Gastrocnemius medialis (tissue), 4 donors: ENCODE measurements at regions of chr16 and their contacts with region 1.

Region 1: DNA sequence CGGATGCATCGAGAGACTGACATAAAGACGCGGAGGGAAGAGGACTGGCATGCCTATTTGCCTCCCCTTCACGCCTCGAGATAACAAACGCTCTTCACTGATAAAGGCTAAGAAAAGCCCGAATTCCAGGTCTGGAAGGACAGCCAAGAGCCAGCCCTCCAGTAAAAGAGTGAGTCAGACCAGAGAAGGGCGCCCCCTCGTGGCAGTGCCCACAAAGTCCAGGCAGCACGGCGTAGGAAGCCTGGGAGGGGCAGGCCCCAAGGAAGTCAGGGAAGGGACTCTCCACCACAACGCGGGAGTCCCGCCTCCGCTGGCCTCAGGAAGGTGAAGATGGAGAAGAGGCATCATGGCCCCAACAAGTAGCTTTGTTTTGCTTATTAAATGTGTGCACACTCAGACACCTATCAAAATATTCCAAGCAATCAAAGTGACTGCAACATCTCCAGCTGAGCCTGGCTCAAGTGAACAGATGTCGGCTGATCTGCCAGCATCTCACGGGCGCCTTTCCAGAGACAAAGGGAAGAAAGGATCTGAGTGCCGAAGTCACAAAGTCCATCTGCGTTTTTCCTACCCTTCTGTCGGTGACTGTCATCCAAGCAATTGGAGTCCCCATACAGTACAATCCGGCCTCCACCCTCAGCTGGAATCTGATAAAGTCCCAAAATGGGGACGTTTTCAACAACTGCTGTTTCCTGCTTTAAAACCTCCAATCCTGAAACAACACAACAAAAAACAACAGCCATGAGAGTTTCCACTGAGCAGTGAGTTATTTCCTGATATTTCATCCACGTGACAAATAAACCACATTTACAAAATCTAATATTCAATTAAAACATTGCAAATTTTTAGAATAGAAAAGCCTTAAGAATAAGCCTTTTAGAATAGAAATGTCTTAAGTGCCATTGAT is 20.4 kb upstream of the SLC38A8 start:
- DNase-seq: peak; percentile 22 to 67
- ATAC-seq: peak; percentile 76 to 78
- H3K4me3 ChIP-seq: no peak overlapping the region
- H3K27ac ChIP-seq: no peak overlapping the region
- H3K4me1 ChIP-seq: no peaks in the 10 kb centered on the region
- H3K27me3 ChIP-seq: no peaks in the 10 kb centered on the region
- CTCF ChIP-seq: peak; percentile 74 to 89 (median 83)
- POLR2A ChIP-seq: no peak

Region 2: DNA sequence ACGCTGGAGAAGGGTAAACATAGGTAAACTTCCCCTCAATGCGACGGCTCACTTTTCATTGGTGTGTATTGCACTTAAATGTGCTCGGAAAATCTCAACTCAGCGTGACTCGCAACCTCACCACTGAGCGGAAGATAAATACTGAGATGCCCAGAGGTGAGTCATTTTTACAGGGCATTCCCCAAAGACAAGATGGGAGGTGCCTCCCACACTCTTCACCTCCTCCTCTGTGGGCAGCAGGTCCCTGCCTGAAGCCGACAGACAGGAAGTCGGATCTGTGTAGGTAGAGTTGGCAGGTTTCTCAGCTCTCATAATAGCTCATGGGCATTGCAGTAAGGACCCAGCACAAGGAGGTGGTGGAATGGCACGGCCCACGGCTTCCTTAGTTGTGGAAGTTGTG is 529.8 kb before region 1 on chr16:
- in situ Hi-C with region 1: no loop called
- intact Hi-C with region 1: no loop called
- DNase-seq: no peak
- ATAC-seq: no peak
- H3K4me3 ChIP-seq: no peak overlapping the region
- H3K27ac ChIP-seq: no peak overlapping the region
- H3K4me1 ChIP-seq: peaks cover 0 to 9% of the 10 kb centered on the region in 2 donors
- H3K27me3 ChIP-seq: no peaks in the 10 kb centered on the region
- CTCF ChIP-seq: no peak
- POLR2A ChIP-seq: no peak

Region 3: GRCh38 chr16:83813823-83814658 is 248.9 kb before region 1 on chr16:
- in situ Hi-C with region 1: loop called in 1 of 4 experiments (anchors 10 kb)
- intact Hi-C with region 1: no loop called
- DNase-seq: no peak
- ATAC-seq: peak; percentile 30 to 39
- H3K4me3 ChIP-seq: no peak overlapping the region
- H3K27ac ChIP-seq: no peak overlapping the region
- H3K4me1 ChIP-seq: peaks cover 10 to 13% of the 10 kb centered on the region in 2 donors
- H3K27me3 ChIP-seq: no peaks in the 10 kb centered on the region
- CTCF ChIP-seq: no peak
- POLR2A ChIP-seq: no peak

Region 4: DNA sequence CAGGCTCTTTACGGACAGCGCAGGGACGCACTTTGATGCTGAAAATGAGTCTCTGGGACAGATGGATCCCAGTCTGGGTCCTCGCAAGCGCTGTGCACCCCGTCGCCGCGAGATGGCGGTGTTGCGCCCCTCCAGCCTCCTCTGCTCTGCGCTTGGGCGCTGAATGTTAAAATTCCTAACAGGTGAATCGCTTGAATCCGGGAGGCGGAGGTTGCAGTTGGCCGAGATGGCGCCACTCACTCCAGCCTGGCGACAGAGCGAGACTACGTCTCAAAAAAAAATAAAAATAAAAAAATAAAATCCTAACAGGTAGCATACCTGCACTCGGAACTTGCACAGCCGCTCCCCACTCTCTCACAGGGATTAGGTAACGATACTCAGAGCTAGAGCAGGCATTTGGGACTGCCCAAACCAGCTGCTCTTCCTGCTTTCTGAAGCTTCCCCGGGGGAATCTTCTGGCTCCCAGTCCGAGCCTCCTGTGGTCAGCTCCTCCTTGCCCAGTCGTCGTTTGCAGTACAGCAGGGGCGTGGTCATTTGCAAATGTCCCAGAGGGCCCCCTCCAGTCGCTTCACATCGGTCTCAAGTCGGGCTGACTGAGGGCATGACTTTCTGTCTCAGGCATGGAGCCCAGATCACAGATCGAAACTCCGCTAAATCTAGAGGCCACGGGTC is 136.1 kb before region 1 on chr16:
- in situ Hi-C with region 1: no loop called
- intact Hi-C with region 1: loop called (anchors 2 kb)
- DNase-seq: peak; percentile 42 to 64
- ATAC-seq: peak; percentile 83 to 86
- H3K4me3 ChIP-seq: no peak overlapping the region
- H3K27ac ChIP-seq: no peak overlapping the region
- H3K4me1 ChIP-seq: peaks cover 8 to 10% of the 10 kb centered on the region in 2 donors
- H3K27me3 ChIP-seq: no peaks in the 10 kb centered on the region
- CTCF ChIP-seq: peak; percentile 75 to 98 (median 92)
- POLR2A ChIP-seq: no peak

Region 5: DNA sequence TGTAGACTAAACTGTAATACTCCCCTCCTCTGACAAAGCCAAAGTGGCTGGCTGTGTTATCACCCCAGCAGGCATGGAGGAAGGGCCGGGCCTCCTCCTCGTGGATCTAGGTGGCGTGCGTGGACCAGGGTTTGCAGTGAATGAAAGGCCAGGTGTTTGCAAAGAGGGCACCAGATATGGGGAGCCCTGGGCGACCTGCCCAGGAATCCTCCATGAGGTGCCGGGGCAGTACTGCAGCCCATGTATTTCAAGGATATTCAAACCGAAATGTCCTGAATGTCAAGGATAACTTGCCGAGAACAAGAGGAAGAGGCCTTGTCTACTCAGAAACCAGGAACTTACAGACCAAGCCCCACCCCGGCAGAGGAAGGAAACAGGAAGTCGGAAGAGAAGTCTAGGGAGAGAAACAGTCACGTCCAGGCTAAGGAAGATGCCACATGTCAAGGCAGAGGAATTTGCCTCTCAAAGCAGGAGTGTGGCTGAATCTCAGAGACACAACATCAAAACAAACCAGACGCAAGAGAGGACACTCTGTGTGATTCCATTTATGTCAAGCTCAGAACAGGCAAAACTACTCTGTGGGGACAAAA is 123.6 kb before region 1 on chr16:
- in situ Hi-C with region 1: no loop called
- intact Hi-C with region 1: no loop called
- DNase-seq: no peak
- ATAC-seq: no peak
- H3K4me3 ChIP-seq: no peak overlapping the region
- H3K27ac ChIP-seq: no peak overlapping the region
- H3K4me1 ChIP-seq: peaks cover 3 to 4% of the 10 kb centered on the region in 2 donors
- H3K27me3 ChIP-seq: no peaks in the 10 kb centered on the region
- CTCF ChIP-seq: no peak
- POLR2A ChIP-seq: no peak

Region 6: GRCh38 chr16:83967806-83968305 is 95.1 kb before region 1 on chr16 and contains the start of gene NECAB2:
- in situ Hi-C with region 1: loop called in 3 of 4 experiments (anchors 10 to 25 kb)
- intact Hi-C with region 1: no loop called
- DNase-seq: no peak
- ATAC-seq: no peak
- H3K4me3 ChIP-seq: peak within 1 kb of the TSS in 2 of 4 donors; percentile 28 to 29
- H3K27ac ChIP-seq: no peak within 1 kb of the TSS
- H3K4me1 ChIP-seq: no peaks in the 10 kb centered on the region
- H3K27me3 ChIP-seq: peaks cover 0 to 7% (median 0%) of the 10 kb centered on the region in 3 donors
- CTCF ChIP-seq: peak in 3 of 5 experiments; percentile 32 to 69 (median 56)
- POLR2A ChIP-seq: no peak
- total RNA-seq, gene NECAB2: not detected

Region 7: DNA sequence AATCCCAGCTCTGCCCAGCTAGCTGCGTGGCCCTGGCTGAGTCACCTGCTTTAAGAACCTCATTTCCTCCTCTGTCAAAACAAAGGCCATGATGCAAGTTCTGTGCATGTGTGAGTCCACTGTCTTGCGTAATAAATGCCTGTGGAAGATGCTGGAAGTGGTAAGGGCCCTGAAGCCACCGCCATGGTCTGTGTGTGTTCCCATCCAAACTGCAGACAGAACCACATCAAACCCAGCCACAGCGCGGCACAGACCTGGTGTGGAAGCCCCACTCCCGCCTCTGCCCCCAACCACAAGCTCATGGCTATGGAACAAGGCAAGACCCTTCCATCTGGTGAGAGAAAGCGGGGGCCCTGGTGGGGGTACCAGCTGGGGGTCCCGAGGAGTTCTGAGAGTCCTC is 68.9 kb before region 1 on chr16:
- in situ Hi-C with region 1: no loop called
- intact Hi-C with region 1: no loop called
- DNase-seq: no peak
- ATAC-seq: no peak
- H3K4me3 ChIP-seq: no peak overlapping the region
- H3K27ac ChIP-seq: no peak overlapping the region
- H3K4me1 ChIP-seq: peaks cover 4 to 11% of the 10 kb centered on the region in 2 donors
- H3K27me3 ChIP-seq: peaks cover 0 to 3% (median 0%) of the 10 kb centered on the region in 3 donors
- CTCF ChIP-seq: no peak
- POLR2A ChIP-seq: no peak